Esophagus squamous epithelium (tissue), 5 donors: ENCODE measurements at regions of chr6 and their contacts with region 1.

Region 1: GRCh38 chr6:166786704-166787293 is 159.7 kb upstream of the RPS6KA2 start:
- DNase-seq: no peak
- H3K4me3 ChIP-seq: no peak overlapping the region
- H3K27ac ChIP-seq: no peak overlapping the region
- H3K4me1 ChIP-seq: no peaks in the 10 kb centered on the region
- H3K27me3 ChIP-seq: no peaks in the 10 kb centered on the region
- CTCF ChIP-seq: peak; percentile 55 to 85 (median 72)
- POLR2A ChIP-seq: no peak

Region 2: DNA sequence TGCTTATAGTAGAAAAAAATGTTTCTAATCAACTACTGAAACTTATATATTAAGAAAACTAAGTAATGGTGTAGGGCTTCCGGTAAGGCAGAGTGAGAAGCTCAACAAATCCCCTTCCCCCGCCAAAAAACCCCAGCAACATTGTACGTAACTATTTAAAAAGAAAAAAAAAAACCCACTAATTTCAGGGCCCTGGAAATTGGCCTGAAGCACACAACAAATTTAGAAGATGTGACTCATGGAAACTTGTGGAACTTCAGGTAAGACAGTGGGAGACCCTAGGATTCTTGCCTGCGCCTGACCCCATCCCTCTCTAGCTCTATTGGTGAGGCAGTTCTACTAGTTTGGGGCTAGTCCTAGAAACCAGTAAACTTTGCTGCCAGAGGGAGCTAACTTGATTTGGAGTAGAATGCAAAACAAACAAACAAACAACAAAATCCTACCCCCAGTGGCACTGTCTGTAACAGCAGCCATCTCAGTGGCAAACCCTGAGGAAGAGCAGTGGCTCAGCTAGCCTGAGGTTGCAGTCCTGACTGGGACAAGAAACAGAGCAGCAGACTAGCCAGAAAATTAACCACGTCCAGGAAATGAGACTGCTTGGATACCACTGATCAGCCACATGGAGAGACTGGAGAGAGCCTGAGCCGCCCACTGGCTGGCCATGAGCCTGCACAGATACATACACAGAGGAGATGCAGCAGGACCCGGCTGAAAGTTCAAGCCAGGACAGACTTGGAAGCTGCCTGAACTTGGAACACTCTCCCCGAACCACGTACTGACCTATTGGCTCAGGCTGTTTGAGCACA is 754.2 kb before region 1 on chr6:
- intact Hi-C with region 1: no loop called
- DNase-seq: no peak
- H3K4me3 ChIP-seq: no peak overlapping the region
- H3K27ac ChIP-seq: no peak overlapping the region
- H3K4me1 ChIP-seq: no peaks in the 10 kb centered on the region
- H3K27me3 ChIP-seq: no peaks in the 10 kb centered on the region
- CTCF ChIP-seq: no peak
- POLR2A ChIP-seq: no peak

Region 3: GRCh38 chr6:166286839-166287271 is 499.9 kb before region 1 on chr6:
- intact Hi-C with region 1: no loop called
- DNase-seq: no peak
- H3K4me3 ChIP-seq: no peak overlapping the region
- H3K27ac ChIP-seq: no peak overlapping the region
- H3K4me1 ChIP-seq: no peaks in the 10 kb centered on the region
- H3K27me3 ChIP-seq: peaks cover 0 to 48% (median 0%) of the 10 kb centered on the region in 4 donors
- CTCF ChIP-seq: no peak
- POLR2A ChIP-seq: no peak

Region 4: DNA sequence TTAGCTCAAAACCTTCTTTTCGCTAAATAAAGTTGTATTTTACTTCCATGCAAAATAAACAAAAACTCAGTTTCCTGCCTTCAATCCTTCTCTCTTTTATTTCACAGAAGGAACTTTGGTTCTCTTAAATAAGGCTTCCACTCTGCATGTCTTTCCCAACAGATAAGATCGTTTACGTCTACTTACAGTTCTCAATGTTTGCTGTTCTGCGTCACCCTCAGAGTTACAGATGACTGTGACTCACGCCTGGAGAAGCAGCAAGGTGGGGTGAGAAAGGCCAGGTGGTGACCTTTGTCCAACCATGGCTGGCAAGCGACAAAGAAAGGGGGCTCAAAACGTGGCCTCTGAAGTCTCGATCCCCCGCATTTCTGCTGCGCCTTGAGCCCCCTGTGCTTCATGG is 108.4 kb before region 1 on chr6:
- intact Hi-C with region 1: no loop called
- DNase-seq: no peak
- H3K4me3 ChIP-seq: no peak overlapping the region
- H3K27ac ChIP-seq: no peak overlapping the region
- H3K4me1 ChIP-seq: peaks cover 0 to 2% (median 0%) of the 10 kb centered on the region in 3 donors
- H3K27me3 ChIP-seq: no peaks in the 10 kb centered on the region
- CTCF ChIP-seq: no peak
- POLR2A ChIP-seq: no peak

Region 5: DNA sequence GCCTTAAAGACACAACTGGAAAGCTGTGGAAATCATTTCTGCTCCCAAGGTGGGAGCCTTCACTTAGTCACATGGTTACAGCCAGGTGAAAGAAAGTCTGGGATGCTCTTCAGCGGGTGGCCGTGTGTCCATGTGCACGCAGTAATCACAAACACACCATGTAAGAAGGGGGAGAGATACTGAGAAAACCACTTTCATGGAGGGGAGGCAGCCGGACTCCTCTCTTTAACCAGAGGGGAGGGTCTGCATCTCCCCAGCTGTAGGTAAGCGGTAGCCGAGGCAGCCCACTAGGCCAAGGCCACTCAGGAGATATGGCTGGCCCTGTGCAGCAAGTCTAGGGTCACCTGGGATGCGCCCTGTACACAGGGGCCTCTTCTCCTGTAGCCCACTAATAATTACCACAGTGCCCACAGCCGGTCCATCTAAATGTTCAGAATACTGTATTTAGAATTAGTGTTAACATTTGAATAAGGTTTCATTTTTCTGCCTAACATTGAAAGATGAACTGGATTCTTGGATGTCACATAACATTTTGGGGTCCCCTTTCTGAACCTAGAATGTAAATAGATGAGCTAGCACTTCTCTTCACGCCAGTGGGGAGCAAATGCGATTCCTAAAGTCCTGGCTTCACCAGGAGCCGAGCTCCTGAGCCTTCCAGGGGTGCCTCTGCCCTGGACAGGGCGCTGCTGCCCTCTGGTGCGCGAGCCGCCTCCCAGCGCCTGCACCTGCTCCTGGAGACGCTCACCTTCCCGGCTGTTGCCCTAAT is 355.1 kb after region 1 on chr6:
- intact Hi-C with region 1: loop called (anchors 5 kb)
- DNase-seq: no peak
- H3K4me3 ChIP-seq: no peak overlapping the region
- H3K27ac ChIP-seq: no peak overlapping the region
- H3K4me1 ChIP-seq: peaks cover 0 to 7% (median 0%) of the 10 kb centered on the region in 3 donors
- H3K27me3 ChIP-seq: peaks cover 0 to 58% (median 0%) of the 10 kb centered on the region in 4 donors
- CTCF ChIP-seq: peak; percentile 47 to 75 (median 64)
- POLR2A ChIP-seq: no peak

Region 6: DNA sequence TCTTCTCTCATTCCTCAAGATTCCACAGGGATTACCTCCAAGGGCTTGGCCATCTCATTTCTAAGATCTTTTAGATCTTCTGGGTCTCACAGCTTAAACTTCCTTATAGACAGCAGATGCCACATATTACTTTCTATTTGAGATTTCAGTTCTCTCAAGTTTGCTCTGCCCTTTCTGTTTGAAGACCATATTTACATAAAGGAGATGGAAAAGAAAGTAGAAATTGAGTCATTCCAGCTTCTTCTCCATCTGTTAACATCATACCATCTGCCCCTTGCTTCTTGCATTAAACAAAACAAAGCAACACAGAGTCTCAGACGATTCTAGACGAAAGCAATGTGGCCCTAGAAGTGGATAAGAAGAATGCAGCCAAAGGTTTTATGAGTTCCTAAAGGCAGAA is 741.4 kb after region 1 on chr6:
- intact Hi-C with region 1: no loop called
- DNase-seq: no peak
- H3K4me3 ChIP-seq: no peak overlapping the region
- H3K27ac ChIP-seq: no peak overlapping the region
- H3K4me1 ChIP-seq: no peaks in the 10 kb centered on the region
- H3K27me3 ChIP-seq: peaks cover 0 to 19% (median 0%) of the 10 kb centered on the region in 4 donors
- CTCF ChIP-seq: no peak
- POLR2A ChIP-seq: no peak